ENCODE measurements at regions of chr3 and their contacts with region 1.

Region 1: GRCh38 chr3:39541917-39542329 is 74.4 kb downstream of the MOBP start:
- DNase-seq: no peak
- H3K4me3 ChIP-seq: no peak overlapping the region
- H3K27ac ChIP-seq: no peak overlapping the region
- H3K4me1 ChIP-seq: peaks cover 8% of the 10 kb centered on the region
- H3K27me3 ChIP-seq: no peaks in the 10 kb centered on the region
- CTCF ChIP-seq: peak; percentile 49 to 63

Region 2: DNA sequence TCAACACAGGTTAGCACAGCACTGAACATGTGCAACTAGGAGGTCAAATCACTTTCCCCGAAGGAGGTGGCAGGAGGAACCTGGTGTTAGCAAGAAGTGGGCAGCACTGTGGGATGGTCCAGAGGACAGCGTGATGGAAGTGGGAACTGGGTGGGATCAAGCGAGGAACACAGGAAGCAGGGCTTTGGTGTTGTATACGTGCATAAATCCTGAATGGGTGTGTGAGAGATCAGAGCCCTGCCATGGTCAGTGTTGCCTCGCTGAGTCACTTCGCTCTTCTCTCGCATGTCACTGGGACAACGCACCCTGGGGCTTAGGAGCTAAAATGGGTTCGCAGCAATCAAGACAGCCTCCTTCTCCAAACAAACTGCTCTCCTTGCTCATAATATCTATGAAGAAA is 12.3 kb before region 1 on chr3:
- CTCF ChIA-PET with region 1: no interaction called
- dilution Hi-C with region 1: no loop called
- in situ Hi-C with region 1: no loop called
- intact Hi-C with region 1: no loop called
- DNase-seq: no peak
- H3K4me3 ChIP-seq: no peak overlapping the region
- H3K27ac ChIP-seq: no peak overlapping the region
- H3K4me1 ChIP-seq: peaks cover 15% of the 10 kb centered on the region
- H3K27me3 ChIP-seq: no peaks in the 10 kb centered on the region
- CTCF ChIP-seq: no peak

Region 3: GRCh38 chr3:39724233-39724846 is 182.4 kb after region 1 on chr3:
- CTCF ChIA-PET with region 1: no interaction called
- dilution Hi-C with region 1: no loop called
- in situ Hi-C with region 1: no loop called
- intact Hi-C with region 1: loop called (anchors 5 kb)
- DNase-seq: no peak
- H3K4me3 ChIP-seq: no peak overlapping the region
- H3K27ac ChIP-seq: no peak overlapping the region
- H3K4me1 ChIP-seq: no peaks in the 10 kb centered on the region
- H3K27me3 ChIP-seq: no peaks in the 10 kb centered on the region
- CTCF ChIP-seq: peak in 1 of 2 donors; percentile 24

Region 4: GRCh38 chr3:40317061-40317855 is 775.3 kb after region 1 on chr3:
- CTCF ChIA-PET with region 1: no interaction called
- dilution Hi-C with region 1: no loop called
- in situ Hi-C with region 1: no loop called
- intact Hi-C with region 1: loop called (anchors 10 kb)
- DNase-seq: peak; percentile 29
- H3K4me3 ChIP-seq: no peak overlapping the region
- H3K27ac ChIP-seq: no peak overlapping the region
- H3K4me1 ChIP-seq: no peaks in the 10 kb centered on the region
- H3K27me3 ChIP-seq: no peaks in the 10 kb centered on the region
- CTCF ChIP-seq: peak; percentile 80 to 82

Measured in mammary epithelial cell (primary cell).